Activated T-helper 1 cell treated with anti-CD3 and anti-CD28 coated beads, Interleukin-12 subunit alpha, Interleukin-12 subunit beta, Interleukin-2, Interleukin-4 antibody, amounts not matched to agents 30 ng/mL and 10 ng/mL and 1 ng/mL, durations not matched to agents 14 hours and 24 hours and 36 hours (primary cell): ENCODE measurements at regions of chr20 and their contacts with region 1.

Region 1: GRCh38 chr20:59177261-59178250 is 13.9 kb downstream of the ZNF831 start:
- DNase-seq: peak; percentile 50
- H3K4me3 Mint-ChIP-seq: peak overlapping the region; percentile 74
- H3K27ac Mint-ChIP-seq: peak overlapping the region; percentile 96
- H3K4me1 Mint-ChIP-seq: peaks cover 67% of the 10 kb centered on the region
- H3K27me3 Mint-ChIP-seq: no peaks in the 10 kb centered on the region

Region 2: GRCh38 chr20:59149651-59150504 is 27.7 kb before region 1 on chr20:
- intact Hi-C with region 1: loop called (anchors 2 kb)
- DNase-seq: peak; percentile 72
- H3K4me3 Mint-ChIP-seq: peak overlapping the region; percentile 57
- H3K27ac Mint-ChIP-seq: peak overlapping the region; percentile 92
- H3K4me1 Mint-ChIP-seq: peaks cover 72% of the 10 kb centered on the region
- H3K27me3 Mint-ChIP-seq: no peaks in the 10 kb centered on the region

Region 3: DNA sequence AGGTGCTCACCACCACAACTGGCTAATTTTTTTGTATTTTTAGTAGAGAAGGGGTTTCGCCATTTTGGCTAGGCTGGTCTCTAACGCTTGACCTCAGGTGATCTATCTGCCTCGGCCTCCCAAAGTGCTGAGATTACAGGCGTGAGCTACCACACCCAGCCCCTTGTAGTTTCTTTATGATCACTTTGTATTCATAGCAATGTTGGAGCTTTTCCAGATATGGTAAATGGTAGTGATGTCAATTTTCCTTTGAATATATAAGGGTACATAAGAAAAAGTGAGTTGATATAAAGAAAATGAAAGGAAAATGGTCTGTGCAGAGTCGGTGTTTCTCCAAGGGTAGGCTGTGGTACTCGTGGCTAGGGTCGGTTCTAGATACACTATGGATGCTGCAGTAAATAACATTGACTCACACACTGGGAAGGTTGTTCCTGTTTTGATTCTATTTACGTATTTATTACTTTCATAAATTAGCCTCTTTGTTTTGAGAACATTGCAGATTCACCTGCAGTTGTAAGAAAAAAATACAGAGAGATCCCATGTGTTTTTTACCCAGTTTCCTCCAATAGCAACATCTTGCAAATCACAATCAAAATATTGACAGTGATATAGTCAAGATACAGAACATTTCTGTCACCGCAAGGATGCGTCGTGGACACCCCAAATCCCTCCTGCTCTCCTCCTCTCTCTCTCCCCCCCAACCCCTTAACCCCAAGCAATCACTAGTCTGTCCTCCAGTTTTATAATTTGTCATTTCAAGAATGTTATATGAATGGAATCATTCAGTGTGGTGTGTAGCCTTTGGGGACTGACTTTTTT is 11.5 kb before region 1 on chr20:
- intact Hi-C with region 1: loop called (anchors 1 kb)
- DNase-seq: no peak
- H3K4me3 Mint-ChIP-seq: peak overlapping the region; percentile 88
- H3K27ac Mint-ChIP-seq: peak overlapping the region; percentile 98
- H3K4me1 Mint-ChIP-seq: peaks cover 88% of the 10 kb centered on the region
- H3K27me3 Mint-ChIP-seq: no peaks in the 10 kb centered on the region

Region 4: DNA sequence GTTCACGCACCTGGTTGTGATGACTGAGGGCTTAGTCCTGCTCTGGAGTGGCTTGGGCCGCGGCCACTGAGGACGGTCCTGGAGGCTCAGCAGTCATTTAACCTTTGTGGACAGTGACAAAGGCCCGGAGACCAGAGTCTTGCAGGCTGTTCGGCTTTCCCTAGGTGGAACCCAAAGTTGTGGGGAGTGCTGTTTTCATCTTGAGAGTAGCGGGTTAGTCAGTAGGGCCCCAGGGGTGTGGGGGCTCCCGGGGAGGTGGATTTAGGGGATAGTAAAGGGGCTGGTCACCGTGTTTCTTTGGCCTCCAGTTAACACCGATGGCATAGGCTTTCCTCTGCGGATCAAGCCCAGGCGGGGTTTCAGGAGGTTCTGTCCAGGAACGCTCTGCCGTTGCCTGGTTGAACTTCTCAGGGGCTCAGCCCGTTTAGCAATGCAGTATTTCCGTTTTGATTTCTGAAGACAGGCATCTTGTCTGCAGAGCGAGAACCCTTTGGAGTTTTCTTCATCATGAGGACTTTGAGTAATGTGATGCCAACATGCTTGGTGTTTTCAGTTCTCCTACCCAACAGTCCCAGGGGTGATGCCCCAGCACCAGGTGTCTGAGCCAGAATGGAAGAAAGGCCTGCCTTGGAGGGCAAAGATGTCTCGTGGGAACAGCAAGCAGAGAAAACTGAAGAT is 17.9 kb after region 1 on chr20:
- intact Hi-C with region 1: loop called (anchors 2 kb)
- DNase-seq: no peak
- H3K4me3 Mint-ChIP-seq: no peak overlapping the region
- H3K27ac Mint-ChIP-seq: no peak overlapping the region
- H3K4me1 Mint-ChIP-seq: no peaks in the 10 kb centered on the region
- H3K27me3 Mint-ChIP-seq: no peaks in the 10 kb centered on the region